ENCODE measurements at regions of chr1 and their contacts with region 1.

Region 1: GRCh38 chr1:239547987-239548386 is 161.6 kb downstream of the CHRM3 start:
- DNase-seq: no peak
- H3K4me3 Mint-ChIP-seq: peak overlapping the region; percentile 59
- H3K27ac Mint-ChIP-seq: peak overlapping the region; percentile 32
- H3K4me1 Mint-ChIP-seq: peaks cover 12% of the 10 kb centered on the region
- H3K27me3 Mint-ChIP-seq: no peaks in the 10 kb centered on the region

Region 2: GRCh38 chr1:239413916-239414315 is 134.1 kb before region 1 on chr1:
- intact Hi-C with region 1: loop called (anchors 10 kb)
- DNase-seq: no peak
- H3K4me3 Mint-ChIP-seq: no peak overlapping the region
- H3K27ac Mint-ChIP-seq: no peak overlapping the region
- H3K4me1 Mint-ChIP-seq: no peaks in the 10 kb centered on the region
- H3K27me3 Mint-ChIP-seq: no peaks in the 10 kb centered on the region